ENCODE measurements at regions of chr16 and their contacts with region 1.

Region 1: GRCh38 chr16:30041846-30042267 is 10.8 kb upstream of the TLCD3B start:
- DNase-seq: peak in 3 of 14 experiments; percentile 45 to 53 (median 45)
- ATAC-seq: no peak
- H3K4me3 ChIP-seq: no peak overlapping the region
- H3K4me3 Mint-ChIP-seq: no peak overlapping the region
- H3K27ac ChIP-seq: no peak overlapping the region
- H3K27ac Mint-ChIP-seq: no peak overlapping the region
- H3K4me1 ChIP-seq: no peaks in the 10 kb centered on the region
- H3K4me1 Mint-ChIP-seq: no peaks in the 10 kb centered on the region
- H3K27me3 ChIP-seq: no peaks in the 10 kb centered on the region
- H3K27me3 Mint-ChIP-seq: peaks cover 4% of the 10 kb centered on the region
- CTCF ChIP-seq: peak; percentile 53

Region 2: DNA sequence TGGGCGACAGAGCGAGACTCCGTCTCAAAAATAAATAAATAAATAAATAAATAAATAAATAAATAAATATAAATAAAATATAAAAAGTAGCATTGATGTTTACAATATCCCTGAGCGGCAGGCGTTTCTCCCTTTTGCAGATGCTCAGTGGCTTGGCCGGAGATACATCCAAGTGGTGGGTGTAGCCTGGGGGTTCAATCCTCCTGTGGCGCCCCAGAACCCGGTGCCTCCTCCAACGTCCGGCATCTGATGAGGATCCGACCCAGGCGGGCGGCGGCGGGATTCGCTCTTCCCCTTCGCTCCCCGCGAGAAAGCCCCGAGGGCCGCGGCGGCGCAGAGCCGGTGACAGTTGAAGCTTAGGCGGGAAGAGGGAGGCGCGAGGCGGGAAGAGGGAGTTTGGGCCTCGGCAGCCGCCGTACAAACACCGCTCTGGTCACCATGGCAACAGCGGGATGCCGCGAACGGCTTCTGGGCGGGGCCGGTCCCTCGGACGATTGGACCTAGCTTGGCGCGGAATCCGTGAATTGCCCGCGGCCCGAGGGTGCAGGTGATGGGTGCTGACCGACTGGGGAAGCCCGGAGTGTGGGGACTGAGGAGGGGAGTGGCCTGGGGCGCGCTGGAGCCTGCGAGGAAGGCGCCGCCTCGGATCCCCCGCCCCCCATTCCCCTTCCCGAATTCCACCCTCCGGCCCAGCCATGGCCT is 11.0 kb after region 1 on chr16:
- CTCF ChIA-PET with region 1: interaction called, 10 read pairs
- POLR2A ChIA-PET with region 1: no interaction called
- intact Hi-C with region 1: no loop called
- DNase-seq: peak; percentile 78 to 93 (median 86)
- ATAC-seq: peak; percentile 70
- H3K4me3 ChIP-seq: peak overlapping the region; percentile 86
- H3K4me3 Mint-ChIP-seq: peak overlapping the region; percentile 88
- H3K27ac ChIP-seq: no peak overlapping the region
- H3K27ac Mint-ChIP-seq: peak overlapping the region; percentile 64
- H3K4me1 ChIP-seq: peaks cover 24% of the 10 kb centered on the region
- H3K4me1 Mint-ChIP-seq: peaks cover 22% of the 10 kb centered on the region
- H3K27me3 ChIP-seq: no peaks in the 10 kb centered on the region
- H3K27me3 Mint-ChIP-seq: no peaks in the 10 kb centered on the region
- CTCF ChIP-seq: no peak

Region 3: DNA sequence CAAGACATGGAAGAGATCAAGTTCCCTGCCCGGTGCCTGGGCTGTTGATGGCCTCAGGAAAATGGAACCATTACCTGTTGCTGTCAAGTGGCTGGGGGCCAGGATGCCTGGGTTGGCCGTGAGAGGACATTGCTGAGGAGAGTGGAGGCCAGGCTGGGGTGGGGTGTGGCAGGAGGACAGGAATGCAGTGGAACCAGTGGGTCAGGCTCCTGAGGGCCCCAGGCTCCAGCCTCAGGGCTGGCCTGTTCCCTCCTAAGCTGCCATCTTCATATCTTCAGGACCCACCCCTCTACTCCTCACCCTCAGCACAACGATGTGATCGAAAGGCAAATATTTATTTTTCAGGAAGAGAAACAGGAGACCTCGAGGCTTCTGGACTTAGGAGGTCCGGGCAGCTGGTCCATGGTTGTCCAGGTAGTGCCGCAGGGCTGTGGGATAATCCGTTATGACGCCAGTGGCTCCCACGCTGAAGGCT is 62.7 kb after region 1 on chr16:
- CTCF ChIA-PET with region 1: no interaction called
- POLR2A ChIA-PET with region 1: no interaction called
- intact Hi-C with region 1: no loop called
- DNase-seq: no peak
- ATAC-seq: no peak
- H3K4me3 ChIP-seq: no peak overlapping the region
- H3K4me3 Mint-ChIP-seq: no peak overlapping the region
- H3K27ac ChIP-seq: no peak overlapping the region
- H3K27ac Mint-ChIP-seq: no peak overlapping the region
- H3K4me1 ChIP-seq: no peaks in the 10 kb centered on the region
- H3K4me1 Mint-ChIP-seq: no peaks in the 10 kb centered on the region
- H3K27me3 ChIP-seq: no peaks in the 10 kb centered on the region
- H3K27me3 Mint-ChIP-seq: no peaks in the 10 kb centered on the region
- CTCF ChIP-seq: no peak

Region 4: GRCh38 chr16:30637942-30638341 is 596.1 kb after region 1 on chr16:
- CTCF ChIA-PET with region 1: no interaction called
- POLR2A ChIA-PET with region 1: no interaction called
- intact Hi-C with region 1: loop called in 1 of 2 experiments (anchors 10 kb)
- DNase-seq: peak in 4 of 14 experiments; percentile 19 to 75 (median 63)
- ATAC-seq: peak; percentile 17
- H3K4me3 ChIP-seq: no peak overlapping the region
- H3K4me3 Mint-ChIP-seq: peak overlapping the region; percentile 48
- H3K27ac ChIP-seq: no peak overlapping the region
- H3K27ac Mint-ChIP-seq: no peak overlapping the region
- H3K4me1 ChIP-seq: peaks cover 19% of the 10 kb centered on the region
- H3K4me1 Mint-ChIP-seq: peaks cover 17% of the 10 kb centered on the region
- H3K27me3 ChIP-seq: no peaks in the 10 kb centered on the region
- H3K27me3 Mint-ChIP-seq: no peaks in the 10 kb centered on the region
- CTCF ChIP-seq: peak; percentile 24

Measured in CD4-positive, alpha-beta T cell (primary cell).